ENCODE measurements at regions of chr13 and their contacts with region 1.

Region 1: GRCh38 chr13:44577236-44578066 is 1.3 kb upstream of the TSC22D1 start:
- DNase-seq: peak; percentile 83 to 95
- H3K4me3 ChIP-seq: peak overlapping the region; percentile 94
- H3K27ac ChIP-seq: peak overlapping the region; percentile 97
- H3K4me1 ChIP-seq: peaks cover 36% of the 10 kb centered on the region
- H3K27me3 ChIP-seq: no peaks in the 10 kb centered on the region
- CTCF ChIP-seq: no peak

Region 2: GRCh38 chr13:44465318-44465717 is 112.1 kb before region 1 on chr13:
- CTCF ChIA-PET with region 1: no interaction called
- POLR2A ChIA-PET with region 1: no interaction called
- intact Hi-C with region 1: no loop called
- DNase-seq: no peak
- H3K4me3 ChIP-seq: no peak overlapping the region
- H3K27ac ChIP-seq: no peak overlapping the region
- H3K4me1 ChIP-seq: no peaks in the 10 kb centered on the region
- H3K27me3 ChIP-seq: no peaks in the 10 kb centered on the region
- CTCF ChIP-seq: no peak

Region 3: GRCh38 chr13:44523146-44524015 is 54.1 kb before region 1 on chr13:
- CTCF ChIA-PET with region 1: no interaction called
- POLR2A ChIA-PET with region 1: no interaction called
- intact Hi-C with region 1: loop called (anchors 5 kb)
- DNase-seq: peak; percentile 21 to 80
- H3K4me3 ChIP-seq: peak overlapping the region; percentile 42; the same call in 1 of the 2 replicates
- H3K27ac ChIP-seq: peak overlapping the region; percentile 88
- H3K4me1 ChIP-seq: peaks cover 40% of the 10 kb centered on the region
- H3K27me3 ChIP-seq: no peaks in the 10 kb centered on the region
- CTCF ChIP-seq: no peak

Region 4: DNA sequence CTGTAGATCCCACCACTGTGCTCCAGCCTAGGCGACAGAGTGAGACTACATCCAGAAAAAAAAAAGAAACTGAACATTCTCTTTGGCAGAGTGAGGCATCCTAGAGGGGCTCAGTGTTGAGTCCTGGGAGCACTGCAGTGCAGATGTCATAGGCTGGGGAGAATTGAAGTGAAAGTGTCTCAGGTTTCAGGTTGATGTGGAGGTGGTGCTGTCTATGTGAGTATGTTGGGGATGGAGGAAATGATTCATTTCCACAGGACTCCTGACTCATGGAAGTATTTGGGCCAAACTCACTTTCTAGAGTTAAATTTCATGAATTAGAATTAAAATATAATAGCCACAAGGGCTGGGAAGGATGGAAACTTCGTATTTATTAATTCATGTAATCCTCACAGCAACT is 133.1 kb after region 1 on chr13:
- CTCF ChIA-PET with region 1: no interaction called
- POLR2A ChIA-PET with region 1: interaction called, 3 read pairs
- intact Hi-C with region 1: loop called (anchors 5 kb)
- DNase-seq: peak; percentile 48 to 89
- H3K4me3 ChIP-seq: no peak overlapping the region
- H3K27ac ChIP-seq: peak overlapping the region; percentile 94
- H3K4me1 ChIP-seq: peaks cover 60% of the 10 kb centered on the region
- H3K27me3 ChIP-seq: no peaks in the 10 kb centered on the region
- CTCF ChIP-seq: no peak

Region 5: DNA sequence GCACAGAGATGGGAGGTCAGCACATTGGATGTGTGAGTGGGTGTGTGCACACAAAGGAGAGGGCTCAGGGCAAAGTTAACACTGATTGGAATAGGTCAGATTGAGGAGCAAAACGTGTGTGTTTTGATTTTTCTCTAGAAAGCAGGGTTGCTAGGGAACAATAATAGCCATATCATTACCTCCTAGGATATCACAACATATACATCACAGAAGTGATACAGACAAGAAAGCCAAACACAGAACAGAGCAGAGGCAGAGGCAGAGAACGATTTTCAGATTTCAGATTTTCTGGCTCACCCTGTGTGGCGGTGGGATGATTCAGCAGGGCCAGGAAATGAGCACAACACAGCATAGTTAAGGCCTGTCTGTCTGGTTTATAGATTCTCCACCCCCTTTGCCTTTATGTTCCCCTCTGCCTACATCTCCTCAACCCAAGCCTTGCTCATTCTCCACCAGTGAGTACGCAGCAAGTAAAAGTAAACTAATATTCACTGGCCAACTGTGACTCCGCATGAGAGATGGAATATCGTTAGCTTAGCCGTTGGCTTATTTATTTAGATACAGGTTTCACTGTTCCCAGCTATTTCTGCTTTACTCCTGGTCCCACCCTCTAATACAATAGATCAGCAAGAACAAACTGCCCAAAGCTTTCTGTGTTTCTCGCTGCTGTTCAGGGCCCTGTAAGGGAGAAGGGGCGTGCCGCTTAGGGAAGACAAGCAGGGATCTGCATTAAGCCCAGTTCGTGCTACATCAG is 181.4 kb after region 1 on chr13:
- CTCF ChIA-PET with region 1: interaction called, 3 read pairs
- POLR2A ChIA-PET with region 1: no interaction called
- intact Hi-C with region 1: loop called (anchors 1 kb)
- DNase-seq: peak; percentile 56 to 91
- H3K4me3 ChIP-seq: peak overlapping the region; percentile 48
- H3K27ac ChIP-seq: peak overlapping the region; percentile 98
- H3K4me1 ChIP-seq: peaks cover 68% of the 10 kb centered on the region
- H3K27me3 ChIP-seq: no peaks in the 10 kb centered on the region
- CTCF ChIP-seq: no peak

Region 6: DNA sequence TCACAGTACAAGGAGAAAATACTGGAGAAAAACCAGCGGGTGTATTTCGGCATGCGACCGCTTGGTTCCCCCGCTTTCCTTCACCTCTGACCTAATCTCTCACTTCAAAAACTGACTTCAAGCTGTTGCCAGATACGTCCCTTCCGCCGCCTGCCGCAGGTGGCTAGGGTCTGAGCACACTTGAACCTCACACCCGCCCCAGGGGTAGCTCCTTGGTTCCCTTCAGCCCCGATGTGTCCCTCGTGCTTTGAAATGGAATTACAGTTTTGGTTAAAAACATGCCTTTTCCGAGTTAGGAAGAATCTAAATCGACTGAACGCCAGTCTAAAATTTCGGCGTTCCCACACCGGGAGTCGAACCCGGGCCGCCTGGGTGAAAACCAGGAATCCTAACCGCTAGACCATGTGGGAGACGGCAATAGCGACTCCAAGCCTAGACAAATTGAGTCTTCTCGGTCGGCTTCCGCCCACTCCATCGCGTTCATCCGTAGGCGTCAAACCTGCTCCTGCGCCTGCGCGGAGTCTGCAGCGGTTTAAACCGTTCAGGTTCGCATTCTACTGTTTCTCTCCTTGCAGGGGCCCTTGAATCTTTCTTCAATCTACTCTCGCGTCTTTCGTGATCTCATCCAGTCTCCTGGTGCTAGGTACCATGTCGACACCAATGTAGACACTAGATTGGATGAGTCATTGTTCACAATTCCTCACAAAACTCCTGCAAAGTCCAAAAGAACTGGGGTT is 340.3 kb after region 1 on chr13:
- CTCF ChIA-PET with region 1: no interaction called
- POLR2A ChIA-PET with region 1: no interaction called
- intact Hi-C with region 1: loop called (anchors 1 kb)
- DNase-seq: peak; percentile 91 to 94
- H3K4me3 ChIP-seq: peak overlapping the region; percentile 63
- H3K27ac ChIP-seq: peak overlapping the region; percentile 86
- H3K4me1 ChIP-seq: peaks cover 34% of the 10 kb centered on the region
- H3K27me3 ChIP-seq: no peaks in the 10 kb centered on the region
- CTCF ChIP-seq: peak; percentile 37; the same call in 1 of the 2 replicates

Region 7: GRCh38 chr13:45602183-45603170 is 1025.0 kb after region 1 on chr13:
- CTCF ChIA-PET with region 1: no interaction called
- POLR2A ChIA-PET with region 1: no interaction called
- intact Hi-C with region 1: no loop called
- DNase-seq: no peak
- H3K4me3 ChIP-seq: no peak overlapping the region
- H3K27ac ChIP-seq: no peak overlapping the region
- H3K4me1 ChIP-seq: no peaks in the 10 kb centered on the region
- H3K27me3 ChIP-seq: peaks cover 82% of the 10 kb centered on the region
- CTCF ChIP-seq: no peak

Measured in PC-9 (cell line).